HepG2 (cell line): ENCODE measurements at regions of chr6 and their contacts with region 1.

Region 1: DNA sequence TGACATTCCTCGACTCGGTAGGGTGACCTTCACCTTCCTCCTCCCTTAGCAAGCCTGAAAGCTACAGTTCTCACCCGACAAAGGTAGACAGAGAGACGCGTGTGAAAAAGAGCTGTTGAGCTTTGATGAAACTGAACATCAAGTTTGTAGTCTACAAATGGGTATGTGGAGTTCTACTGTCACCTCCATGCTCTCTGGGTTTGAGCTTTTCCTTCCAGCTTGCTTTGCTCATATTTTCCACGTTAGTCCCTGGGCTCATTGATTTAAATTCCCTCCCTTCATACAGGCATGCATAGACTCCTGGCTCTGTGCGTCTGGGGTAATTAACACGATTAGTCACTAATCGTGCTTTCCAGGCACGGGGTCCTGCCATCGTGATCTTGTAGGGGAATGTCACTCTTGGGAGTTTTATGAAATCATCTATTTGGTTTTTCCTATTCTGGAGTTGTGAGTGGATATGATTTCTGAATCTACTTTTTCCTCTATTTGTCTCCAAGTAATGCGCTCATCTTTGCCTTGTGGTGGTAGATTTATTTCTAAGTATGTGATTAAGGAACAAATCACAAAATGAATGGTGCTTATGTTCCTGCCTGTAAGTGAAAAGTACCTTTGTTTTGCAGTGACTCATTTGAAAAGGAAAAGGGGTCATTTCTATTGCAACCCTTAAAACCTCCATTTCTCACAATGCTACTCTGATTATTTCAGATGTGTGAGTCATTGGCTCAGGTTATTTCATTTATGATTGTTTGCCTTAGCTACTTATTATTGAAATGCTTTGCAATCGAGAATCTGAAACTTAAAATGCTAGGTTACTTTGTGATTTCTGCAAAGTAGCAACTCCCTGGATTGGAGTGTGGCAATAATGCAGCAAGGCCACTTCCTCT is 154.6 kb downstream of the ZDHHC14 start:
- DNase-seq: peak; percentile 86
- ATAC-seq: no peak
- H3K4me3 ChIP-seq: peak overlapping the region in 2 of 3 experiments; percentile 19; a peak in 3 of 6 replicates
- H3K27ac ChIP-seq: peak overlapping the region; percentile 64
- H3K4me1 ChIP-seq: peaks cover 100% of the 10 kb centered on the region
- H3K27me3 ChIP-seq: no peaks in the 10 kb centered on the region
- CTCF ChIP-seq: no peak
- EP300 ChIP-seq: no peak
- POLR2A ChIP-seq: peak in 1 of 2 experiments; percentile 40; a peak in 1 of 4 replicates
- RAD21 ChIP-seq: no peak

Region 2: GRCh38 chr6:157514659-157515496 is 20.7 kb before region 1 on chr6:
- CTCF ChIA-PET with region 1: no interaction called
- POLR2A ChIA-PET with region 1: interaction called, 186 read pairs
- in situ Hi-C with region 1: no loop called
- intact Hi-C with region 1: loop called (anchors 1 kb)
- DNase-seq: peak; percentile 75
- ATAC-seq: peak; percentile 61
- H3K4me3 ChIP-seq: no peak overlapping the region
- H3K27ac ChIP-seq: peak overlapping the region; percentile 22
- H3K4me1 ChIP-seq: peaks cover 83% of the 10 kb centered on the region
- H3K27me3 ChIP-seq: no peaks in the 10 kb centered on the region
- CTCF ChIP-seq: no peak
- EP300 ChIP-seq: peak in 1 of 2 experiments; percentile 53; a peak in 1 of 4 replicates
- POLR2A ChIP-seq: no peak
- RAD21 ChIP-seq: no peak

Region 3: DNA sequence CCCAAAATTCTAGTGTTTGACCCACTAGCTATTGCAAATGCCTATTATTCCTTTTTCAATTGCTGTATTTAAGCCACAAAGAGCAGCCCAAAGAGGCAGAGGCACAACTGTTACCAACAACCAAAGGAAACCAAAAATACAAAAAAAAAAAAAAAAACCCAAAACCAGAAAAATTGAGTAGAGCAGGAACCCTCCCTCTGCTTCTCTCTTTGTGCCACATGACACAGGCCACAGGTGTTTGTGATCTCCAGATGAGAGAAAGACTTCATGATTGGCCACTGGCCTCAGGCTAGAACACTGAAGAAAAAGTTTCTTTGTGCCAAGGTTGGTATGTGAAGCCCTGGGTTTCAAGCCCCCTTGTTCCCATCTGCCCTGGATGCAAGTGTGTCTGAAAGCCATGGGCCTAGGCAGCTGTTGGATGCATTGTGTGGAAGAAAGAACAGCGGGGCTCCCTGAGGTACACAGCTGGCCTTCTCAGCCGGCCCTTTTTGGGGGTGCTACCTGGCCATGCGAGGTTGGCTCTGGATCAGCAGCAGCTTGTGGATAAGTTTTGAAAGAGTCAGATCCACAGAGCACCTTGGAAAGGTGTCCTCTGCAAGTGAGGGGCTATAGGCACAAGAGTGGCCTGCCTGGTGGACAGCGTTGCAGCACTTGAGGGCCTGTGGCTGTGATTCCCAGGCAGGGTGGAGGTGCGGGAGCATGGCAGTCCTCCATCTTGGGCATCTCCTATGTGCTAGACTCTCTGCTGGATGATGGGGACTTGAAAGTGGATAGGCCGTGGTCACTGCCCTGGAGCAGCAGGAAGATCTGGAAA is 49.9 kb after region 1 on chr6:
- CTCF ChIA-PET with region 1: no interaction called
- POLR2A ChIA-PET with region 1: interaction called, 31 read pairs
- in situ Hi-C with region 1: no loop called
- intact Hi-C with region 1: no loop called
- DNase-seq: no peak
- ATAC-seq: peak; percentile 41
- H3K4me3 ChIP-seq: no peak overlapping the region
- H3K27ac ChIP-seq: peak overlapping the region; percentile 67
- H3K4me1 ChIP-seq: peaks cover 28% of the 10 kb centered on the region
- H3K27me3 ChIP-seq: no peaks in the 10 kb centered on the region
- CTCF ChIP-seq: no peak
- EP300 ChIP-seq: no peak
- POLR2A ChIP-seq: no peak
- RAD21 ChIP-seq: no peak

Region 4: GRCh38 chr6:157715765-157716164 is 180.2 kb after region 1 on chr6:
- CTCF ChIA-PET with region 1: no interaction called
- POLR2A ChIA-PET with region 1: no interaction called
- in situ Hi-C with region 1: no loop called
- intact Hi-C with region 1: no loop called
- DNase-seq: no peak
- ATAC-seq: peak; percentile 31; the same call in 2 of the 3 replicates
- H3K4me3 ChIP-seq: no peak overlapping the region
- H3K27ac ChIP-seq: no peak overlapping the region
- H3K4me1 ChIP-seq: peaks cover 27% of the 10 kb centered on the region
- H3K27me3 ChIP-seq: peaks cover 6 to 28% of the 10 kb centered on the region in 2 experiments; a peak in 3 of 5 replicates
- CTCF ChIP-seq: no peak
- EP300 ChIP-seq: no peak
- POLR2A ChIP-seq: no peak
- RAD21 ChIP-seq: no peak

Region 5: GRCh38 chr6:157954150-157955117 is 418.9 kb after region 1 on chr6:
- CTCF ChIA-PET with region 1: no interaction called
- POLR2A ChIA-PET with region 1: no interaction called
- in situ Hi-C with region 1: no loop called
- intact Hi-C with region 1: no loop called
- DNase-seq: peak; percentile 95
- ATAC-seq: peak; percentile 88
- H3K4me3 ChIP-seq: peak overlapping the region; percentile 49 to 72 (median 54)
- H3K27ac ChIP-seq: peak overlapping the region; percentile 87
- H3K4me1 ChIP-seq: peaks cover 50% of the 10 kb centered on the region
- H3K27me3 ChIP-seq: no peaks in the 10 kb centered on the region; a peak in 1 of 5 replicates
- CTCF ChIP-seq: peak; percentile 87
- EP300 ChIP-seq: peak in 1 of 2 experiments; percentile 86; a peak in 3 of 4 replicates
- POLR2A ChIP-seq: peak; percentile 33 to 74; a peak in 3 of 4 replicates
- RAD21 ChIP-seq: peak; percentile 80